A673 (cell line): ENCODE measurements at regions of chr1 and their contacts with region 1.

Region 1: GRCh38 chr1:151615711-151616504 is 4.1 kb downstream of the SNX27 start:
- DNase-seq: no peak
- H3K4me3 ChIP-seq: no peak overlapping the region
- H3K27ac ChIP-seq: no peak overlapping the region
- H3K4me1 ChIP-seq: peaks cover 30% of the 10 kb centered on the region
- H3K27me3 ChIP-seq: no peaks in the 10 kb centered on the region
- CTCF ChIP-seq: no peak

Region 2: GRCh38 chr1:149917571-149918144 is 1698.2 kb before region 1 on chr1 and contains the start of gene SV2A:
- CTCF ChIA-PET with region 1: no interaction called
- POLR2A ChIA-PET with region 1: interaction called, 19 read pairs
- intact Hi-C with region 1: no loop called
- DNase-seq: peak; percentile 79
- H3K4me3 ChIP-seq: peak within 1 kb of the TSS; percentile 72
- H3K27ac ChIP-seq: peak within 1 kb of the TSS; percentile 47
- H3K4me1 ChIP-seq: peaks cover 19% of the 10 kb centered on the region
- H3K27me3 ChIP-seq: no peaks in the 10 kb centered on the region
- CTCF ChIP-seq: no peak
- total RNA-seq, gene SV2A: 33.1 and 35.4 TPM in 2 replicates

Region 3: DNA sequence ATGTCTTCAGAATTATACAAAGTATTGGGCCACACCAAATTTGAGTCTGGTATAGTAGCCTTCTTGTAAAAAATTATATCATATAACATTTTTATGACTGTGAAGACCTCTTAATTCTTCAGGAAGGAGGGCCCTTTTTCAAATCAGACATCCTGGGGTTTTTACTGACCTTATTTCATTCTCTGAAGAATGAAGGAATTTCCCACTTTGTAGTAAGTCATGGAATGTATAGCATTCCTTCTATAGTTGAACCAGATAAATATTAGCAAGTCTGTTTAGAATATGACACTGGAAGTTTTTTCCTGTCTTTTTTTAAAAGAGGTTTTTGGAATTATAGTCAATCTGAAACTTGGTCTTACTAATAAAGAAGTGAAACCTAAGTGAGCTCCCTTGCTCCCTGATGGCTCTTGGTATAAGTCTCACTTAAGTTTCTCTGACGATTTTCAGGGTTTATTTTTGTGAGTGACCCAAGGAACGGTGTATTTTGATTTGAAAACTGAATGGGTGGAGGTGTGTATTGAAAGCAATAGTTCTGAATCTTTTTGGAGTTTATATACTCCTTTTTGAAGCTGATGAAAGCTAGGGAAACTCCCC is 19.7 kb after region 1 on chr1:
- CTCF ChIA-PET with region 1: no interaction called
- POLR2A ChIA-PET with region 1: interaction called, 13 read pairs
- intact Hi-C with region 1: no loop called
- DNase-seq: no peak
- H3K4me3 ChIP-seq: no peak overlapping the region
- H3K27ac ChIP-seq: no peak overlapping the region
- H3K4me1 ChIP-seq: peaks cover 22% of the 10 kb centered on the region
- H3K27me3 ChIP-seq: no peaks in the 10 kb centered on the region
- CTCF ChIP-seq: no peak

Region 4: GRCh38 chr1:151680812-151681211 is 64.9 kb after region 1 on chr1:
- CTCF ChIA-PET with region 1: no interaction called
- POLR2A ChIA-PET with region 1: no interaction called
- intact Hi-C with region 1: no loop called
- DNase-seq: peak; percentile 68
- H3K4me3 ChIP-seq: no peak overlapping the region
- H3K27ac ChIP-seq: no peak overlapping the region
- H3K4me1 ChIP-seq: peaks cover 8% of the 10 kb centered on the region
- H3K27me3 ChIP-seq: no peaks in the 10 kb centered on the region
- CTCF ChIP-seq: no peak